ENCODE measurements at regions of chr1 and their contacts with region 1.

Region 1: DNA sequence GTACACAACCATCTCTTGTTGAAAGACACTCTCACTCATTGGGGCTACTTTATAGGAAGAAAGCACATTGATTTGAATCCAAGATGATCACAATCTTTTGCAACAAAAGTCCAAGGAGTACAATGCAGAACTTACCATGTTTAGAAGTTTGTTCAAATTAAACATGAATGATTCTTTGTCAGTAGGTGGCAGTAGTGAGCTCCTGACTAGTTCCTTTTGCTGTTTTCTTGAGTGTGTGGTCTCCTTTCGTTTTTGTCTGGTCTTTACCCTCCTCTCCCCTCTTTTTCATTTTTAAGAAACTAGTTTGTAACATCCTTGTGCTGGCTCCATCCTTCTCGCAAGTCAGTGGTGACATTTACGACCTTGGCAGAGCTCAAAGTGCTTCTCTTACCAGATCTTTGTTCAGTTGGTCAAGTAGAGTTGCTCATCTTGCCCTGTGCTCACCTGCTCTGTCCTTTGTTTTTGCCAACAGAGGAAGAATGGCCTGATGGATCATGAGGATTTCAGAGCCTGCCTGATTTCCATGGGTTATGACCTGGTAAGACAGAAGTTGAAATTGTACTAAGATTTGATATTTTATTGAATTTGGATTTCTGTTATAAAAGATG is 35.7 kb upstream of the MTR start:
- DNase-seq: no peak
- H3K4me3 Mint-ChIP-seq: no peak overlapping the region
- H3K27ac Mint-ChIP-seq: no peak overlapping the region
- H3K4me1 Mint-ChIP-seq: peaks cover 1% of the 10 kb centered on the region
- H3K27me3 Mint-ChIP-seq: no peaks in the 10 kb centered on the region

Region 2: GRCh38 chr1:236741753-236742152 is 17.6 kb before region 1 on chr1:
- CTCF ChIA-PET with region 1: interaction called, 15 read pairs
- POLR2A ChIA-PET with region 1: no interaction called
- intact Hi-C with region 1: no loop called
- DNase-seq: no peak
- H3K4me3 Mint-ChIP-seq: no peak overlapping the region
- H3K27ac Mint-ChIP-seq: no peak overlapping the region
- H3K4me1 Mint-ChIP-seq: no peaks in the 10 kb centered on the region
- H3K27me3 Mint-ChIP-seq: peaks cover 2% of the 10 kb centered on the region

Region 3: DNA sequence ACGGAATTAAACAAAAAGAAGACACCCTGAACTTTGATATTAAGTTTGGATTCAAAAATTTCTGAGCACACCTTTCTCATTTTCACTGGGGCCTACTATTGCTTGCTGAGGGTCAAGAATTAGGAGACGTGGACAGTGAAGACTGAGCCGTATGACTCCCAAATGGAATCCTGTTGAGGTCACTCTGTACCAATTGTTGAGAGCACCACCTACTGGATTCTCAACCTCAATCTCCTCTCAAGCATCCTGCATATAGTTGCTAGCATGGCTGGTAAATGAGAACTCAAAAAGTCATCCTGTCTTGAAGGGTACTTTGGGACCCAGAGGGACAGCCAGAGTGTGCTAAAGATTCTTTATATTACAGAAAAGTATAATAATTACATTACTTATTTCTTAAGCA is 15.6 kb after region 1 on chr1:
- CTCF ChIA-PET with region 1: interaction called, 10 read pairs
- POLR2A ChIA-PET with region 1: no interaction called
- intact Hi-C with region 1: no loop called
- DNase-seq: no peak
- H3K4me3 Mint-ChIP-seq: no peak overlapping the region
- H3K27ac Mint-ChIP-seq: no peak overlapping the region
- H3K4me1 Mint-ChIP-seq: no peaks in the 10 kb centered on the region
- H3K27me3 Mint-ChIP-seq: peaks cover 28% of the 10 kb centered on the region

Region 4: GRCh38 chr1:236821091-236821627 is 61.8 kb after region 1 on chr1:
- CTCF ChIA-PET with region 1: interaction called, 10 read pairs
- POLR2A ChIA-PET with region 1: no interaction called
- intact Hi-C with region 1: no loop called
- DNase-seq: no peak
- H3K4me3 Mint-ChIP-seq: no peak overlapping the region
- H3K27ac Mint-ChIP-seq: no peak overlapping the region
- H3K4me1 Mint-ChIP-seq: peaks cover 13% of the 10 kb centered on the region
- H3K27me3 Mint-ChIP-seq: no peaks in the 10 kb centered on the region

Region 5: GRCh38 chr1:237386362-237387143 is 627.2 kb after region 1 on chr1:
- CTCF ChIA-PET with region 1: interaction called, 19 read pairs
- POLR2A ChIA-PET with region 1: no interaction called
- intact Hi-C with region 1: loop called (anchors 2 kb)
- DNase-seq: no peak
- H3K4me3 Mint-ChIP-seq: no peak overlapping the region
- H3K27ac Mint-ChIP-seq: no peak overlapping the region
- H3K4me1 Mint-ChIP-seq: no peaks in the 10 kb centered on the region
- H3K27me3 Mint-ChIP-seq: peaks cover 4% of the 10 kb centered on the region

Measured in activated CD4-positive, alpha-beta memory T cell treated with anti-CD3 and anti-CD28 coated beads for 36 hours (primary cell).